ENCODE measurements at regions of chr21 and their contacts with region 1.

Region 1: GRCh38 chr21:45973659-45974072 is 7.9 kb upstream of the COL6A1 start:
- DNase-seq: peak; percentile 64 to 81 (median 73)
- H3K4me3 ChIP-seq: peak overlapping the region; percentile 52 to 63
- H3K4me3 Mint-ChIP-seq: peak overlapping the region; percentile 87 to 96 (median 90)
- H3K27ac ChIP-seq: no peak overlapping the region
- H3K27ac Mint-ChIP-seq: peak overlapping the region; percentile 53 to 84 (median 68)
- H3K4me1 ChIP-seq: peaks cover 39% of the 10 kb centered on the region
- H3K4me1 Mint-ChIP-seq: peaks cover 3 to 30% (median 7%) of the 10 kb centered on the region in 4 donors
- H3K27me3 ChIP-seq: peaks cover 35% of the 10 kb centered on the region
- H3K27me3 Mint-ChIP-seq: peaks cover 9 to 22% of the 10 kb centered on the region in 2 donors

Region 2: DNA sequence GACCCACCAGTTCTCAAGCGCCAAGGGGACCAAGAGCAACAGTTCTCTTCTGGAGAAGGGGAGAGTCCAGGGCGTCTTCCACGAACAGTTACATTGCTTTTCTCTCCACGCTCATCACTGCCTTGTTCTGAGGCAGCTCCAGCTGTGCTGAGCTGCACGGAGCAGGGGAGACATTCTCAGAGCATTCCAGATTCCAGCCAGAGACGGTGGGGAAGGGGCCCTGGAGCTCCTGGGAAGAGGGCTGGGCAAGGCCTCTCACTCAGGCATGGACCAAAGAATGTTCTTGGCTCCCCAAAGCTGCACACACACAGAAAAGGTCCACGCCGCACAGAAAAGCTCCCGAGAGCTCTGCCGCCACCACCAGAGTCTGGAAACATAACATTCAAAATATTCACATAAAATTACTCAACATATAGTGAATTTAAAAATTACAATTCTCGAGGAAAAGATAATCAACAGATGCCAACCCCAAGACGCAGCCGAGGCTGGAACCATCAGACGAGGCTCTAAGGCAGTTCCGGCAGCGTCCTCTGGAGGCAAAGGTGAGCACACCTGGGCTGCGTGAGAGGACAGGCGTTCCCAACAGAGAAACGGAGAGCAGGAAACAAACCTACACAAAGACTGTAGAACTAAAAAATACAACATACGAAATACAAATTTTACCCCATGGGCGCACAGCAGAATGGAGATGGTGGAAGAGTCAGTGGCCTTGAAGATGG is 1212.5 kb before region 1 on chr21:
- CTCF ChIA-PET with region 1: no interaction called
- POLR2A ChIA-PET with region 1: no interaction called
- intact Hi-C with region 1: no loop called
- DNase-seq: peak in 1 of 5 donors; percentile 18
- H3K4me3 ChIP-seq: no peak overlapping the region
- H3K4me3 Mint-ChIP-seq: peak overlapping the region in 1 of 8 donors; percentile 0
- H3K27ac ChIP-seq: no peak overlapping the region
- H3K27ac Mint-ChIP-seq: peak overlapping the region in 5 of 7 donors; percentile 5 to 75 (median 69)
- H3K4me1 ChIP-seq: peaks cover 17% of the 10 kb centered on the region
- H3K4me1 Mint-ChIP-seq: peaks cover 12 to 14% (median 13%) of the 10 kb centered on the region in 4 donors
- H3K27me3 ChIP-seq: no peaks in the 10 kb centered on the region
- H3K27me3 Mint-ChIP-seq: no peaks in the 10 kb centered on the region

Region 3: GRCh38 chr21:44994695-44995342 is 978.8 kb before region 1 on chr21:
- CTCF ChIA-PET with region 1: no interaction called
- POLR2A ChIA-PET with region 1: no interaction called
- intact Hi-C with region 1: no loop called
- DNase-seq: no peak
- H3K4me3 ChIP-seq: no peak overlapping the region
- H3K4me3 Mint-ChIP-seq: no peak overlapping the region
- H3K27ac ChIP-seq: no peak overlapping the region
- H3K27ac Mint-ChIP-seq: no peak overlapping the region
- H3K4me1 ChIP-seq: no peaks in the 10 kb centered on the region
- H3K4me1 Mint-ChIP-seq: no peaks in the 10 kb centered on the region
- H3K27me3 ChIP-seq: no peaks in the 10 kb centered on the region
- H3K27me3 Mint-ChIP-seq: peaks cover 0 to 3% of the 10 kb centered on the region in 2 donors

Region 4: GRCh38 chr21:46097336-46098293 is 123.9 kb after region 1 on chr21 and contains the start of gene COL6A2:
- CTCF ChIA-PET with region 1: no interaction called
- POLR2A ChIA-PET with region 1: no interaction called
- intact Hi-C with region 1: loop called (anchors 5 kb)
- DNase-seq: peak in 4 of 5 donors; percentile 27 to 43 (median 36)
- H3K4me3 ChIP-seq: no peak within 1 kb of the TSS
- H3K4me3 Mint-ChIP-seq: peak within 1 kb of the TSS; percentile 57 to 89 (median 70)
- H3K27ac ChIP-seq: no peak within 1 kb of the TSS
- H3K27ac Mint-ChIP-seq: peak within 1 kb of the TSS in 4 of 7 donors; percentile 65 to 92 (median 74)
- H3K4me1 ChIP-seq: no peaks in the 10 kb centered on the region
- H3K4me1 Mint-ChIP-seq: peaks cover 3 to 6% (median 5%) of the 10 kb centered on the region in 4 donors
- H3K27me3 ChIP-seq: no peaks in the 10 kb centered on the region
- H3K27me3 Mint-ChIP-seq: peaks cover 13 to 21% of the 10 kb centered on the region in 2 donors
- total RNA-seq, gene COL6A2: 21.8 to 25.7 TPM